ENCODE measurements at regions of chr11 and their contacts with region 1.

Region 1: DNA sequence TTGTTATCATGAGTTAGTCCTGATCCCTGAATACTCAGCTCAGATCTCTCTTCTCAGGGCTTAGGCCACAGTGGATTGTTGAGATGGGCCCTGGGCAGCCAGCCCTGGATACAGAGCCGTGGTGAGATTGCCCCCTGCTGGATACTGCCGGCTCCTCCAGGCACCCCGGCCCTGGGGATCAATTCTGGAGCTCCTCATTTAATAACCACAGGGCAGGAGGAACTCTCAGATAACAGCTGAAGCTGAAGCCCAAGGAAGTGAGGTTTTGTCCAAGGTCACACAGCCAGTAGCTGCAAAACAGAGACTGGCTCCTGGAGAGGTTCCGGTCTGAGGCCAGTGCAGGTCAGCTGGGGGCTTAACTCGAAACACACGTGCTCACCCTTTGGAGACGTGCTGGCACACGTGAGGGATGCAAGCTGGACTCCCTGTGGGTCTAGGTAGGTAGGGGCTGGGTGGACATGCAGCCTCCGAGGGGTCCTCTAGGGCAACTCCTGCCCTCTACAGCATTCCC is 16.0 kb downstream of the USH1C start:
- DNase-seq: peak; percentile 70
- ATAC-seq: peak; percentile 92
- H3K4me3 Mint-ChIP-seq: no peak overlapping the region
- H3K27ac Mint-ChIP-seq: no peak overlapping the region
- H3K4me1 Mint-ChIP-seq: no peaks in the 10 kb centered on the region
- H3K27me3 Mint-ChIP-seq: peaks cover 7% of the 10 kb centered on the region
- CTCF ChIP-seq: peak; percentile 72

Region 2: DNA sequence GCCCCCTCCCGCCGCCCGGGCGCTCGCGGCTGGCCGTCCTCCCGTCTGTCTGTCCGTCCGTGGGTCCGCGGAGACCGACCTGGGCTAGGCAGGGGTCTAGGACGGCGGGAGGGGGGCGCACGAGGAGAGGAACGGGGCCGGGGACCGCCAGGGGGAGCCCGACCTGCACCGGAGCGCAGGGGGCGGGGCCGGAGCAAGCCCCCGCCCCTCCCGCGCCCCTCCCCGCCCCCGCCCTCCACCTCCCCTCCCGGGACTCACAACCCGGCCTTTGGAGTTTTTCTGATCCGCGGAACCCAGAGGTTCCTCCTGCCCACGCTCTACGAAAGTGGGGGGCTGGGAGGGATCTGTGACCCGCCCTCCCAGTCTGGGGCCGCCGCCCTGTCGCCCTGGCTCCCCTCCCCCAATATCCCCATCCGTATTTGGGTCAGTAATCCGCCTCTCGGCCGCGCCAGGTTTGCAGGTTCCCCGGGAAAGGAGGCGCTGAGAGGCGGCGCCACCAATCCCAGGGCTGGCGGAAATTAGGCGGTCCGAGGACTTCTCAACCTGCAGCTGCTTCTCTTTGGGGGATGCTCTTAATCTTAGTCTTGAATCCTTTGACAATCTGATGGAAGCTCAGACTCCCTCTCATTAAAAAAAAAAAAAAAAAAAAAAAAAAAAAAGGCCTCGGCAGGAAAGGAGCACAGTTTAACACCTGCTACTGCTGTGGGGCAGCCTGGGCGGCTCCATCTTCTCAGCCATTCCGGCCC is 138.9 kb before region 1 on chr11:
- CTCF ChIA-PET with region 1: interaction called, 39 read pairs
- POLR2A ChIA-PET with region 1: no interaction called
- intact Hi-C with region 1: no loop called
- DNase-seq: peak; percentile 82
- ATAC-seq: peak; percentile 84
- H3K4me3 Mint-ChIP-seq: peak overlapping the region; percentile 69
- H3K27ac Mint-ChIP-seq: peak overlapping the region; percentile 9
- H3K4me1 Mint-ChIP-seq: peaks cover 4% of the 10 kb centered on the region
- H3K27me3 Mint-ChIP-seq: peaks cover 2% of the 10 kb centered on the region
- CTCF ChIP-seq: peak; percentile 78

Region 3: DNA sequence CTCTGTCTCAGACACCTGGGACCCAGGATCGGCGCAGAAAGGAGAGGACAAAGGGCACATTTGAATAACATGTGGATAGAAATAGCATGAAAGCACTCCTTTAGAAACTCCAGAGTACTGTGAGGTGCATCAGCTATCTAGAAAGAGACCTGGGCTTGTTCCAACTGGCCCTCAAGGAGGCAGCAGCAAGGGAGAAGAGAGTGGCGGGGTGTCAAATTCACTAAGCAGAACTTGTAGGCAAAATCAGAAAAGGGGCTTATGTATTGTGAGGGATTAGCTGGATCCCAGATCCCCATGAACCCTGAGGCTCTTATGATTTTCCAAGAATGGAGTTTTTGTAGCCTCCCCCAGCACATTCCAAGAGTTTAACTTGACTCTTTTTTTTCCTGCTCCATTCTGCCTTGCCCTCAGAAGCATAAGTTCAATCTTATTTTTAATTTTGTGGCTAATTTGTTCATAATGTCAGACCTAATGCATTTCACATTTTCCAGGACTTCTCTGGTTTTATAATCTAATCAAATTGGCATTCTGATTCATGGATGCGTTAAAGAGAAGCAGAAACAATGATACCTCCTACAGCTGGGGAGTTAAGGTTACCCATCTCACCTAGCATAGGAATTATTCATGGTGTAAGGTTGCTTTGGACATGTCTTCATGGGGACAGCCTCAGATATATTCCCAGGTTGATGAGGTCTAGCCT is 17.6 kb before region 1 on chr11:
- CTCF ChIA-PET with region 1: interaction called, 47 read pairs
- POLR2A ChIA-PET with region 1: no interaction called
- intact Hi-C with region 1: no loop called
- DNase-seq: no peak
- ATAC-seq: no peak
- H3K4me3 Mint-ChIP-seq: no peak overlapping the region
- H3K27ac Mint-ChIP-seq: no peak overlapping the region
- H3K4me1 Mint-ChIP-seq: no peaks in the 10 kb centered on the region
- H3K27me3 Mint-ChIP-seq: peaks cover 7% of the 10 kb centered on the region
- CTCF ChIP-seq: no peak

Measured in activated CD8-positive, alpha-beta T cell treated with anti-CD3 and anti-CD28 coated beads for 36 hours (primary cell).